A549 (cell line): ENCODE measurements at regions of chr15 and their contacts with region 1.

Region 1: DNA sequence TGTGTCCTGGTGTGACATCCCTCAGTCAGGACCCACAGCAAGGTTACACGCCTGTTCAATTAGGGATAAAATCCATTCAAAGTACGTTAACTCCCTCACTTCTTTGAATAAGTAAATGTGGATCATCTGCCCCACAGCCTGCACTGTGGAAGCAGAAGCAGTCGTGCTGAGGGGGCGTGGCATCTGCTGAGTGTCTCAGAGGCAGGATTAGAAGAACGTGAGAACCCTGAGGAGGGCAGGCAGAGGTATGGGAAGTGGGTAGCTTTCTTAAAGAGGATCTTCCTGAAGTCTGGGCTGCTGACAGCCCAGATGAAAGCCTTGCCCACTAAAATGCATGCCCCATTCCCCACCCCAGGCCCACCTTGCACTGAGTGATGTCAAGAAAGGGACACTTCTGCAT is 28.5 kb downstream of the CRABP1 start:
- DNase-seq: no peak
- ATAC-seq: peak; percentile 30 to 45; a peak in 2 of 6 replicates
- H3K4me3 ChIP-seq: no peak overlapping the region
- H3K27ac ChIP-seq: no peak overlapping the region
- H3K4me1 ChIP-seq: peaks cover 8% of the 10 kb centered on the region
- CTCF ChIP-seq: no peak
- EP300 ChIP-seq: no peak
- POLR2A ChIP-seq: no peak
- RAD21 ChIP-seq: no peak

Region 2: GRCh38 chr15:78389322-78389721 is 20.7 kb after region 1 on chr15:
- CTCF ChIA-PET with region 1: interaction called, 11 read pairs
- POLR2A ChIA-PET with region 1: no interaction called
- DNase-seq: no peak
- ATAC-seq: no peak
- H3K4me3 ChIP-seq: no peak overlapping the region
- H3K27ac ChIP-seq: no peak overlapping the region
- H3K4me1 ChIP-seq: no peaks in the 10 kb centered on the region
- CTCF ChIP-seq: no peak
- EP300 ChIP-seq: no peak
- POLR2A ChIP-seq: no peak
- RAD21 ChIP-seq: no peak